ENCODE measurements at regions of chr7 and their contacts with region 1.

Region 1: DNA sequence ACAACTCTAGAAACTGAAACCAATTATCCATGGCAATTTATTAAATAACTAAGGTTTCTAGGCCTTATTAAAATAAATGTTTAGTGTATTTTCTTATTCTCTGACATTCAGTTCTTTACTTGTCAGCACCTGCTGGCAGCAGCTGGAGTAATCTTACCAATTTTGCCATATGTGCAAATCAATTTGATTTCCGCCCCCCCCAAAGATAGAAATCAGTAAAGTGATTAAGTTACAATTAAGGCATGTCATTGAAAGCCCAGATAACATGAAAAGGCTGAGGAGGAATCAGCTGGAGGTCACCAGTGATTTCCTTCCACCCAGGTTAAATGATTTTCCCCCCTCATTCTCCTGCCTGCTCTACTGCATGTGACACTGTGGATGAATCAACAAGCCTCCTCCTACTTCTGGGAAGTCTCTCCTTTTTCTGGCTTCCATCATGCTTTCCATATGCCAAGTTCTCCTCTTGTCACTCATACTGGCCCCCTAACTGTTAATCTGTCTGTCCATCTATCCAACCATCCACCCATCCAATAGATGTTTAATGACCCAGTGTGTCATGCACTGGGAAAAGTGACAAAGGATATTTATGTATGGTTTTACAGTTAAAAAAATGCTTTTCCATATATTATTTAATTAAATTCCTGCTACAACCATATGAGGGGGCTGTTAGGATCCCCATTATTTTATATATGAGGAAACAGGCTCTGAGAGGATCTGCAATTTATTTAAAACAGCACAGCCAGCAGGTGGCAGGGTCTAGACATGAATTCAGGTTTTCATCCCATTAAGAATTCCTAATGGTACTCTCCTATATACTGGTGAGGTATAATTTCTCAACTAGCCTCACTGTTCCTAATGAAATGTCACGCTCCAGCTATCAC is 116.5 kb downstream of the ATXN7L1 start:
- DNase-seq: no peak
- H3K4me3 ChIP-seq: no peak overlapping the region
- H3K27ac ChIP-seq: no peak overlapping the region
- H3K4me1 ChIP-seq: no peaks in the 10 kb centered on the region
- H3K27me3 ChIP-seq: no peaks in the 10 kb centered on the region
- CTCF ChIP-seq: peak; percentile 11 to 64 (median 23)

Region 2: GRCh38 chr7:106009403-106010226 is 249.7 kb after region 1 on chr7:
- intact Hi-C with region 1: loop called (anchors 10 kb)
- DNase-seq: peak; percentile 54 to 85
- H3K4me3 ChIP-seq: peak overlapping the region in 1 of 2 donors; percentile 40
- H3K27ac ChIP-seq: no peak overlapping the region
- H3K4me1 ChIP-seq: no peaks in the 10 kb centered on the region
- H3K27me3 ChIP-seq: no peaks in the 10 kb centered on the region
- CTCF ChIP-seq: peak; percentile 83 to 98 (median 86)

Region 3: GRCh38 chr7:106041140-106041717 is 281.3 kb after region 1 on chr7:
- intact Hi-C with region 1: loop called (anchors 1 kb)
- DNase-seq: no peak
- H3K4me3 ChIP-seq: no peak overlapping the region
- H3K27ac ChIP-seq: no peak overlapping the region
- H3K4me1 ChIP-seq: no peaks in the 10 kb centered on the region
- H3K27me3 ChIP-seq: no peaks in the 10 kb centered on the region
- CTCF ChIP-seq: peak; percentile 25 to 66 (median 46)

Region 4: GRCh38 chr7:106153891-106154449 is 394.1 kb after region 1 on chr7:
- intact Hi-C with region 1: loop called (anchors 10 kb)
- DNase-seq: peak in 1 of 2 donors; percentile 89
- H3K4me3 ChIP-seq: no peak overlapping the region
- H3K27ac ChIP-seq: no peak overlapping the region
- H3K4me1 ChIP-seq: no peaks in the 10 kb centered on the region
- H3K27me3 ChIP-seq: no peaks in the 10 kb centered on the region
- CTCF ChIP-seq: peak; percentile 85 to 96 (median 91)

Measured in ascending aorta (tissue), 2 donors.